PC-9 (cell line): ENCODE measurements at regions of chr2 and their contacts with region 1.

Region 1: DNA sequence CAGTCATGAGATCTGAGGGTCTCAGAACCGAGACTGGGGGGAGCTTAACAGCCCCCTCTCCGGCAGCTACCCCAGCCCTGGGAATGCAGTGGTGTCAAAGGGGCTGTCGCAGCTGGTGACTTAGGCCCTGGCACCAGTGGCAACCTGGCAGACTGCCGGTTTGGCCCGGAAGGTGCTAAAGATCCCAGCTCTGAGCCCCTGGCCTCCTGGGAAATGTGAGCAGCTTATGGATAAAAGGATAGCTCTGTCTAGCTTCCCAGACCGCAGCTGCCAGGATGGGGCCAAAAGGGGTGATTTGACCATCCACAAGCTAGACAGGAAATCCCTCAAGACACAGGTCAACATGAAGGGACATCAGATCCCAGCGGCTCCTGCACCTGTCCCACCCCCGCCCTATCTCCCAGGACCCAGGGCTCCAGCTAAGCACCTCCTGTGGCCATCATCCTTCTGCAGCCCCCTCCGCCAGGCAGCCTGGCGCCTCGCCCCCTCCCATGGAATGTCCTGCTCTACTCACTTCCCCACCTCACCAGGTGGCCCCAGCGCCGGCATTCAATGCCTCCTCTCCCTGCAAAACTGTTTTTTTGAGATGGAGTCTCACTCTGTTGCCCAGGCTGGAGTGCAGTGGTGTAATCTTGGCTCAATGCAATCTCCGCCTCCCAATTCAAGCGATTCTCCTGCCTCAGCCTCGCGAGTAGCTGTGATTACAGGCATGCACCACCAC is 33.2 kb upstream of the EFHD1 start:
- DNase-seq: no peak
- H3K4me3 ChIP-seq: no peak overlapping the region
- H3K27ac ChIP-seq: no peak overlapping the region
- H3K4me1 ChIP-seq: no peaks in the 10 kb centered on the region
- H3K27me3 ChIP-seq: no peaks in the 10 kb centered on the region
- CTCF ChIP-seq: no peak

Region 2: GRCh38 chr2:232578626-232579025 is 21.6 kb before region 1 on chr2:
- CTCF ChIA-PET with region 1: interaction called, 16 read pairs
- POLR2A ChIA-PET with region 1: no interaction called
- intact Hi-C with region 1: no loop called
- DNase-seq: no peak
- H3K4me3 ChIP-seq: no peak overlapping the region
- H3K27ac ChIP-seq: no peak overlapping the region
- H3K4me1 ChIP-seq: no peaks in the 10 kb centered on the region
- H3K27me3 ChIP-seq: no peaks in the 10 kb centered on the region
- CTCF ChIP-seq: no peak